WTC11 (cell line): ENCODE measurements at regions of chr11 and their contacts with region 1.

Region 1: DNA sequence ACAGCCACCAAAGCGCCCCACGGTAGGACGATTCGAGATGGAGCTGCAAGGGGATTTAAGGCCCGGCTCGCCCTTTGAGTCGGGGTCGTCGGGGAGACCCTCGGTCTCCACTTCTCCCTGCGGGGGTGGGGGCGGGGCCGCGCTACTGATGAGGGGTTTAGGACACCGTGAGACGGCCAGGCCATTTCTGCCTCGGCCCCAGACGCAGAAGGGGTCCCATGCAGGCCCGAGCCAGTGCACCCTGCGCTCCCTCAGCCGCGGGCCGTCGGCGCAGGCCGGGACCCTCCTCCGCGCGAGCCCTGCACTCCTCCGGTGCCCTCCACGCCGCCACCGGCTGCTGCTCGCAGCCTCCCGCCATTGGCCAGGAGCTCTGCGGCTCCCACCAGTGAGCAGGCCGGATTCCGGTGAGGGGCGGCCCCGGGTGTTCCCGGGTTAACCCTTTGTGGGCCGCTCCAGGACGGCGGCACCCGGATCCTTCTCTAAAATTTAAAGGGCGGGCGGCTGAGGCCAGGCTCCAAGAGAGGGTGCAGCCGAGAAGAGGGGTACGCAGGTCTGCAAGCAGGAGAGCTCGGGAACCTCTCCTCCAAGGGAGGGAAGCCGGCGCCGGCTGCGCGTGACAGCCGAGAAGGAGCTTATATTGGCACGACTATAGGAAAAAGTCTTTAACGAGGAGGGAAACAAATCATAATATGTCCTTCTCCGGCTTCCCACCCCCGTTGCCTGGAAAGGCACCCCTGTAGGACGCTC is 18.0 kb downstream of the CREB3L1 start:
- DNase-seq: peak; percentile 90
- ATAC-seq: peak; percentile 68
- H3K4me3 Mint-ChIP-seq: peak overlapping the region; percentile 82
- H3K27ac Mint-ChIP-seq: peak overlapping the region; percentile 93
- H3K4me1 Mint-ChIP-seq: peaks cover 50% of the 10 kb centered on the region
- H3K27me3 Mint-ChIP-seq: no peaks in the 10 kb centered on the region
- CTCF ChIP-seq: no peak

Region 2: DNA sequence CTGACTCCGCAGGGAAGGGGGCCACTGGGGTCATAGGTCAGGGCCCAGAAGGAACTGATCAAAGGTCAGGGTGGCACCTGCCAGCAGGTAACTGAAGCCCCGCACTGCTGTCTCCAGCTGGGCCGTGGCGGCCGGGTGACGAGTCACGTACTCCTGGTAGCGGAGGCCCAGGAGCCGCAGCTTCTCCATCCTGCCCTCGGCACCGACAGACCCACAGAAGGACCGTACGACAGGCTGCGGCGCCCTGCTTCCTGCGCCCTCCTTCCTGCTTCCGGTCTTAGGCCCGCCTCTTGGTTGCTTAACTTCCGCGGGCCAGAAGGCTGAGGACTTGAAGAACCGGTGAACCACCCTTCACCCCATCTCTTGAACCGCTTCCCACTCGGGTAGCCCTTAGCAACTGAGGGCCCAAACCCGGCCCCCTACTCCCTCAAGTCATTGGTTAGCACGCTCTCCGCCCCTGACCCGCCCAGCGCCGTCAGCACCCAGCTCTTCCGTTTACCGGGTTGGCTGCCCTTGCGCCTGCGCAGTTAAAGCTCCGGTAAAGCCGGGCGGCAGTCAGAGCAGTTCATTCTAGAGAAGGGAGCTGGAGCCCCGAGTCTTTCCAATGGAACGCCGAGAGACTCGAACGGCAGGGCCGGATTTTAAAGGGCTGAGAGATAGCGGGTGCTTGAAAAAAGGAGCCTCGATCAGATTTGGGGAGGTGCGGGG is 377.7 kb before region 1 on chr11 and contains the start of gene PEX16:
- CTCF ChIA-PET with region 1: no interaction called
- POLR2A ChIA-PET with region 1: interaction called, 10 read pairs
- DNase-seq: peak; percentile 94
- ATAC-seq: peak; percentile 68
- H3K4me3 Mint-ChIP-seq: peak within 1 kb of the TSS; percentile 93
- H3K27ac Mint-ChIP-seq: peak within 1 kb of the TSS; percentile 96
- H3K4me1 Mint-ChIP-seq: peaks cover 32% of the 10 kb centered on the region
- H3K27me3 Mint-ChIP-seq: peaks cover 2% of the 10 kb centered on the region; the same call in 1 of the 2 replicates
- CTCF ChIP-seq: no peak
- total RNA-seq, gene PEX16: 35.8 to 39.3 TPM (median 36.0 TPM) in 3 replicates

Region 3: GRCh38 chr11:46247664-46248063 is 47.8 kb before region 1 on chr11:
- CTCF ChIA-PET with region 1: interaction called, 61 read pairs
- POLR2A ChIA-PET with region 1: interaction called, 86 read pairs
- DNase-seq: peak; percentile 75
- ATAC-seq: peak; percentile 48
- H3K4me3 Mint-ChIP-seq: no peak overlapping the region
- H3K27ac Mint-ChIP-seq: peak overlapping the region; percentile 33
- H3K4me1 Mint-ChIP-seq: peaks cover 27% of the 10 kb centered on the region
- H3K27me3 Mint-ChIP-seq: peaks cover 2% of the 10 kb centered on the region; the same call in 1 of the 2 replicates
- CTCF ChIP-seq: peak; percentile 32; the same call in 1 of the 2 replicates

Region 4: GRCh38 chr11:46278387-46279125 is 16.9 kb before region 1 on chr11:
- CTCF ChIA-PET with region 1: interaction called, 132 read pairs
- POLR2A ChIA-PET with region 1: interaction called, 67 read pairs
- DNase-seq: peak; percentile 83
- ATAC-seq: peak; percentile 68
- H3K4me3 Mint-ChIP-seq: peak overlapping the region; percentile 79
- H3K27ac Mint-ChIP-seq: peak overlapping the region; percentile 26
- H3K4me1 Mint-ChIP-seq: peaks cover 41% of the 10 kb centered on the region
- H3K27me3 Mint-ChIP-seq: peaks cover 10% of the 10 kb centered on the region
- CTCF ChIP-seq: peak; percentile 53

Region 5: DNA sequence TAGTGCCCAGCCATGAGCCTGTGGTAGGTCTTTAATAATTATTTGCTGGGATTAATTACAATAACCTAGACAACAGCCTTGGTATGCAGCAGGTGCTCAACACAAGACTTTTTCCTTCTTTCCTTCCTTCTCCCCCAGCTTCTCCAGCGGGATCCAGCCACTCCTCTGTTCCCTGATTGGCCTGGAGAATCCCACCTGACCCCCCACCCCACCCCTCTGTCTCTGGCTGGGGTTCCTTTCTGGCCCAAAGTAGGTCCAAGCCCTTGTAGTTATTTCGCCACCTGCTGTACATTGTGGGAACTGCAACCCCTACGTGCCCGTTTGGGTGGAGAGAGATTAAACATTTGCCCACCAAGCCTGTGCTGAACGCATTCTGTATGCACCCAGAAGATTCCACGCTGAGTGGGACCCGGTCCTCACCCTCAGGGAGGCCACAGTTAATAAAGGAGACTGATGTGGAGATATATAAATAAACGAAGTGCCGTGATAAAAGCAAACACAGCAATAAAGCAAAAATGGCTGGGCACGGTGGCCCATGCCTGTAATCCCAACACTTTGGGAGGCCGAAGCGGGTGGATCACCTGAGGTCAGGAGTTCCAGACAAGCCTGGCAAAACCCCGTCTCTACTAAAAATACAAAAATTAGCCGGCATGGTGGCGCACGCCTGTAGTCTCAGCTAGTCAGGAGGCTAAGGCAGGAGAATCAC is 19.7 kb after region 1 on chr11:
- CTCF ChIA-PET with region 1: interaction called, 242 read pairs
- POLR2A ChIA-PET with region 1: interaction called, 6 read pairs
- DNase-seq: peak; percentile 95
- ATAC-seq: peak; percentile 97
- H3K4me3 Mint-ChIP-seq: no peak overlapping the region
- H3K27ac Mint-ChIP-seq: no peak overlapping the region
- H3K4me1 Mint-ChIP-seq: peaks cover 6% of the 10 kb centered on the region
- H3K27me3 Mint-ChIP-seq: no peaks in the 10 kb centered on the region; the same call in 1 of the 2 replicates
- CTCF ChIP-seq: peak; percentile 98

Region 6: GRCh38 chr11:46332568-46333393 is 37.3 kb after region 1 on chr11:
- CTCF ChIA-PET with region 1: interaction called, 18 read pairs
- POLR2A ChIA-PET with region 1: interaction called, 3 read pairs
- DNase-seq: peak; percentile 55
- ATAC-seq: peak; percentile 54
- H3K4me3 Mint-ChIP-seq: peak overlapping the region; percentile 69
- H3K27ac Mint-ChIP-seq: no peak overlapping the region
- H3K4me1 Mint-ChIP-seq: peaks cover 67% of the 10 kb centered on the region
- H3K27me3 Mint-ChIP-seq: peaks cover 56% of the 10 kb centered on the region
- CTCF ChIP-seq: no peak

Region 7: GRCh38 chr11:46346886-46347636 is 51.6 kb after region 1 on chr11 and contains the start of gene DGKZ:
- CTCF ChIA-PET with region 1: interaction called, 32 read pairs
- POLR2A ChIA-PET with region 1: interaction called, 13 read pairs
- DNase-seq: peak; percentile 81
- ATAC-seq: peak; percentile 77
- H3K4me3 Mint-ChIP-seq: peak within 1 kb of the TSS; percentile 77
- H3K27ac Mint-ChIP-seq: no peak within 1 kb of the TSS; the same call in 1 of the 2 replicates
- H3K4me1 Mint-ChIP-seq: peaks cover 86% of the 10 kb centered on the region
- H3K27me3 Mint-ChIP-seq: peaks cover 11% of the 10 kb centered on the region
- CTCF ChIP-seq: peak; percentile 80
- total RNA-seq, gene DGKZ: 107 to 139 TPM (median 115 TPM) in 3 replicates

Region 8: GRCh38 chr11:46404476-46405017 is 109.1 kb after region 1 on chr11:
- CTCF ChIA-PET with region 1: no interaction called
- POLR2A ChIA-PET with region 1: no interaction called
- DNase-seq: no peak
- ATAC-seq: no peak; the same call in 1 of the 2 replicates
- H3K4me3 Mint-ChIP-seq: no peak overlapping the region
- H3K27ac Mint-ChIP-seq: no peak overlapping the region
- H3K4me1 Mint-ChIP-seq: no peaks in the 10 kb centered on the region
- H3K27me3 Mint-ChIP-seq: no peaks in the 10 kb centered on the region
- CTCF ChIP-seq: no peak